Left ventricle myocardium inferior (tissue), 1 donor: ENCODE measurements at regions of chr2 and their contacts with region 1.

Region 1: GRCh38 chr2:17830053-17831034 is 14.1 kb downstream of the MSGN1 start:
- DNase-seq: peak; percentile 79
- H3K4me3 ChIP-seq: peak overlapping the region; percentile 36
- H3K27ac ChIP-seq: no peak overlapping the region
- H3K4me1 ChIP-seq: peaks cover 10% of the 10 kb centered on the region
- H3K27me3 ChIP-seq: peaks cover 7% of the 10 kb centered on the region
- CTCF ChIP-seq: peak; percentile 93

Region 2: GRCh38 chr2:17719562-17720371 is 110.6 kb before region 1 on chr2:
- intact Hi-C with region 1: loop called (anchors 5 kb)
- DNase-seq: no peak
- H3K4me3 ChIP-seq: no peak overlapping the region
- H3K27ac ChIP-seq: no peak overlapping the region
- H3K4me1 ChIP-seq: no peaks in the 10 kb centered on the region
- H3K27me3 ChIP-seq: no peaks in the 10 kb centered on the region
- CTCF ChIP-seq: peak; percentile 90